Activated CD4-positive, alpha-beta memory T cell treated with anti-CD3 and anti-CD28 coated beads, Interleukin-2, amount 10 ng/mL, durations not matched to agents 7 days and 5 days (primary cell): ENCODE measurements at regions of chr14 and their contacts with region 1.

Region 1: GRCh38 chr14:21257394-21257909 is 11.8 kb downstream of the HNRNPC start:
- DNase-seq: no peak
- H3K4me3 Mint-ChIP-seq: peak overlapping the region; percentile 22
- H3K27ac Mint-ChIP-seq: peak overlapping the region; percentile 65
- H3K4me1 Mint-ChIP-seq: peaks cover 74% of the 10 kb centered on the region
- H3K27me3 Mint-ChIP-seq: no peaks in the 10 kb centered on the region

Region 2: DNA sequence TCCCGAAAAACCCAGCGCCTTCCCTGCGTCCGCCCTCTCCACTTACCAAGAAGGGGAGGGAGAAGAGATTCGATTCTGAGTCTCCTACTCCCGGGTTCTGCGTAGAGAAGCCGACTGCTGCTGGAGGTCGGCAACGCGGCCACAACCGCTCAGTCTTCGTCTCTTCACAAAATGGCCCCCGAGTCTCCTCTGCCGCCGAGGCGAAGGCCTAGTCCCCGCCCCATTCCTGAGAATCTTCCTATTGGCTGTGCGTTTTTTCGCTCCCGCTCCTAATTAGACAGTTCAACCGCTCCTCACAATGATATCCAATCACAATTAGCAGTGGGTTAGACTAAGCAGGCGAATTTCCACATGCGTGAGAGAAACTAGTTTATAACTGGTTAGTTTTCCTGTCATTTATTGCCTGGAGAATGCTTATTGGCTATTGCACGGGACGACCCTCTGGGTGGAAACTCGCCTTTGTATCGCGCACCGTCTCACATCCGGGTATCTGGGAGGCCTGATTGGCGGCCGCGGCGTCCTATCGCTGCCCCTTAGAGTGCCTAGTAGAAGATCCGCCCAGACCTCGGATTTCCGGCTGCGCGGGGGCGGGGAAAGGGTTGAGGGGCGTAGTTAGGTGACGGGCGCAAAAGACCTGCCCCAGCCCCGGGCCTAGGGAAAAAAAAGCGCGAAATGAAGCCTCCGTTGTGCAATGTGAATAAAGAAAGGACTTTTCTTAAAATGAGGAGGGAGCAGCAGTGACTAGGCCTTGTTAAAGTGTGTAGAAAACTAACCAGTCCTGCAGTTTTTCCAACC is 12.0 kb after region 1 on chr14 and contains the start of gene HNRNPC:
- CTCF ChIA-PET with region 1: interaction called, 5 read pairs
- POLR2A ChIA-PET with region 1: interaction called, 76 read pairs
- DNase-seq: peak; percentile 100
- H3K4me3 Mint-ChIP-seq: peak within 1 kb of the TSS; percentile 99
- H3K27ac Mint-ChIP-seq: peak within 1 kb of the TSS; percentile 99
- H3K4me1 Mint-ChIP-seq: peaks cover 36% of the 10 kb centered on the region
- H3K27me3 Mint-ChIP-seq: no peaks in the 10 kb centered on the region
- total RNA-seq, gene HNRNPC: 689 to 710 TPM